ENCODE measurements at regions of chr15 and their contacts with region 1.

Region 1: GRCh38 chr15:39756806-39757522 is 25.7 kb downstream of the FSIP1 start:
- DNase-seq: peak; percentile 36
- H3K4me3 ChIP-seq: no peak overlapping the region
- CTCF ChIP-seq: peak; percentile 28

Region 2: DNA sequence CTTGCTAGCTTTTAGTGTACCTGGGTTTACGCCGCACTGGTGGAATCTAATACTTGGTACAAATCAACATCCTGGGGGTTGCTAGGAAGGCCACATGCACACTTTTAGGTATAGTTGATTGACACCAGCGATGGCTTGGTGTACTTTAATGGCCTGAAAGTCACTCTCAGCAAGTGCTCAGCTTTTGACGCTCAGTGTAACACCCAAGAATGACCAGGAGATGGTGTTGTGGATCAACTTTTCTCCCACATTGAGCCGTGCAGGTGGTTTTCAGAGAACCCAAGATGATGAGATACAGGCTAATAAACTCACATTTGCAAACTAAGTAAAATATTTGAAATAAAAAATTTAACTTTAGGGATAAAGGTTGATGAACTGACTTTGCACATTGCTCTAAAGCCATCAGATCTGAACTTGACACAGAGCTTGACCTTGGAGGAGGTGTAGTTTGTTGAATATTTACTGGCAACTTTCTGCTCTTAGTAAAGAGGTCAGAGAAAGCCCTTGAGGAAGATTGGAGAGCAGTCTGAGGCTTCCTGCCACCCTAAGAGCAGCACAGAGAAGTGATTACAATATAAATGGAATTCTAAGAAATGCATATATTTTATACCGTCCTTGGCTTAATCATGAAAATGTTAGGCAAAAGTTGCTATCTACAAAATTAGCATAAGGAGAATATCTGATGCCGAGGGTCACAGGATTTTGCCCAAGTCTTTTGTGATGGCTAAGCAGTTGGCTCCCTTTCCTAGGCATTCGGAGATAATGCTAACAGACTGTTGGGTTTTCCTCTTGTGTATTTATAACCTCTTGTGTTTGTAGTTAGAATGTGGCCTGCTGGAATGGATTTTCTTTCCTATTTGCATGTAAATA is 1048.9 kb before region 1 on chr15:
- CTCF ChIA-PET with region 1: interaction called, 13 read pairs
- POLR2A ChIA-PET with region 1: no interaction called
- DNase-seq: no peak
- H3K4me3 ChIP-seq: no peak overlapping the region
- CTCF ChIP-seq: peak; percentile 70

Region 3: DNA sequence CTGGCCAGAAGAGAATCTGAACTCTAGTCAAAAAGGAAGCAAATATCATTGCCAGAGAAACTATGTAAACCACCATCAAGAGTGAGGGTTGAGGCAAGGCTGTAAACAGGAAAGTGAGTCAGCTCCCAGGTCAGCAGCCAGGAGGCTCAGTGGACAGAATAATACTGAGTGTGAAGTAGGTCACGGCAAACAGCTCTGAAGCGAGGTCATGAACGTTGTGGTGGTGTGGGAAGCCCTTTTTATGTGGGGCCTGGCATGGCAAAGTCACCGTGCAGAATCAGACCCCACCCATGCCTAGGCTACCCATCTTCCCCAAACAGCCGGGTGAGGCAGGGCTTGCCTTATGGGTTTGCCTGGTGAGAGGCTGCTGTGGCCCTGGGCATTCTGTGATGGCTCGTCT is 132.2 kb before region 1 on chr15:
- CTCF ChIA-PET with region 1: interaction called, 94 read pairs
- POLR2A ChIA-PET with region 1: no interaction called
- DNase-seq: peak; percentile 65
- H3K4me3 ChIP-seq: no peak overlapping the region
- CTCF ChIP-seq: no peak

Region 4: DNA sequence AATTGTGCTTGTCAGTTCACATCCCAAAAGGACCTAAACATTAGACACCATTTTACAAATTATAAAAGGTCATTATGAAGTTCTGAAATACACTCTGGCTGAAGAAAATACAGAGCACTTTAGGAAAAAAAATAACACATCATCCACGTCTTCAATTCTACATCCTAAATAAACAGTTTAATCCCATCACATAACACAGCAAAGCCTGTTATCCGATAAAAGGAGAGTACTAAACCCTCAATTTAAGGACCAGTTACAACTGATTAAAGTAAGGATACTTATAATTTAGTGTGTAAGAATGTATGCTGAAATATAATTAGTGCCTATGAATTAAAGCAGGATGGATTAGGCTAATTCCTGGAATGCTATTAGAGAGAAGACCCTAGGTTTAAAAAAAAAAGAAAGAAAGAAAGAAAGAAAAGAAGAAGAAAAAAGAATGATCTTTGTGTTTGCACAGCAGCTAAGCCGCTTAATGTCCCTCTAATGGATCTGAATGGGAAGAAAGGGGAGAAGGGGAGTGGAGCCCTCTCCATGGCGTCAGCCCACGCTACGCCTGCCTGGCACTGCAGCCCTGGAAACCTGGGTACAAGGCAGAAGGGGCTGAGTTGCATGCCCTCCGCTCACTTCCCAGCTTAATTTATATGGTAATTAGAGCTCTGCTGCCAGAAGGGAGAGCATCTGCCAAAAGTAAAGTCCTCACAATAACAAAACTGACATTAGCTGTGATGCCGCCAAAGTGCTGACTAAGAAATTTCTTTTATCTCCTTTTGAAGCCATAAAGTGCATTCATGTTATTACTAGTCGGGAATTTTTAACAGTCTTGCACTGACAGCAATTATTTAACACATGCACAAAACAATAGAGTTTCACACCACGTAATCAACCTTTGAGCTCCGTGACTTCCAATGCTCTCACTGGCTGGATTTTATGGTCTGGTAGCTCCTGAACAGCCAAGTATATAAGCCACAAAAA is 64.3 kb before region 1 on chr15:
- CTCF ChIA-PET with region 1: interaction called, 288 read pairs
- POLR2A ChIA-PET with region 1: no interaction called
- DNase-seq: no peak
- H3K4me3 ChIP-seq: no peak overlapping the region
- CTCF ChIP-seq: no peak

Region 5: GRCh38 chr15:39720621-39721611 is 36.0 kb before region 1 on chr15:
- CTCF ChIA-PET with region 1: interaction called, 10 read pairs
- POLR2A ChIA-PET with region 1: no interaction called
- DNase-seq: peak; percentile 78
- H3K4me3 ChIP-seq: no peak overlapping the region
- CTCF ChIP-seq: no peak

Region 6: GRCh38 chr15:39770748-39771689 is 14.1 kb after region 1 on chr15:
- CTCF ChIA-PET with region 1: interaction called, 54 read pairs
- POLR2A ChIA-PET with region 1: no interaction called
- DNase-seq: peak; percentile 79
- H3K4me3 ChIP-seq: no peak overlapping the region
- CTCF ChIP-seq: no peak